Ovary (tissue), 10 donors: ENCODE measurements at regions of chr7 and their contacts with region 1.

Region 1: DNA sequence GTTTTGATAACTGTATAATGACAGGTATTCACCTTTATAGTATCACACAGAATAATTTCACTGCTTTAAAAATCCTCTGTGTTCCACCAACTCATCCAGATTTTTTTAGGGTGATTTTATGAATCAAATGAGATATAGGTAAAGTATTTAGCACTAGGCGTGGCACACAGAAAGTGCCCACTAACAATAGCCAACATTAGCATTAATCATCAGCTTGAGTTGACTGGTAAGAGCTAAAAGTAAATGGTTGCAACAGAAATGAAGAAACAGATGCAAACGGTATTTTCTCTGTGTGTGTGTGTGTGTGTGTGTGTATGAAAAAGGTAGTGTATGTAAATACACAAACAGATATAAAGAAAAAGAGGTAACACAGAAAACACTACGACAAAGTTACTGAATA is 378.8 kb upstream of the ETV1 start:
- DNase-seq: no peak
- H3K4me3 ChIP-seq: no peak overlapping the region
- H3K27ac ChIP-seq: no peak overlapping the region
- H3K4me1 ChIP-seq: no peaks in the 10 kb centered on the region
- H3K27me3 ChIP-seq: no peaks in the 10 kb centered on the region
- CTCF ChIP-seq: no peak
- EP300 ChIP-seq: no peak
- POLR2A ChIP-seq: no peak

Region 2: GRCh38 chr7:14305233-14305866 is 62.9 kb before region 1 on chr7:
- intact Hi-C with region 1: no loop called
- DNase-seq: no peak
- H3K4me3 ChIP-seq: no peak overlapping the region
- H3K27ac ChIP-seq: no peak overlapping the region
- H3K4me1 ChIP-seq: no peaks in the 10 kb centered on the region
- H3K27me3 ChIP-seq: no peaks in the 10 kb centered on the region
- CTCF ChIP-seq: no peak
- EP300 ChIP-seq: no peak
- POLR2A ChIP-seq: no peak

Region 3: DNA sequence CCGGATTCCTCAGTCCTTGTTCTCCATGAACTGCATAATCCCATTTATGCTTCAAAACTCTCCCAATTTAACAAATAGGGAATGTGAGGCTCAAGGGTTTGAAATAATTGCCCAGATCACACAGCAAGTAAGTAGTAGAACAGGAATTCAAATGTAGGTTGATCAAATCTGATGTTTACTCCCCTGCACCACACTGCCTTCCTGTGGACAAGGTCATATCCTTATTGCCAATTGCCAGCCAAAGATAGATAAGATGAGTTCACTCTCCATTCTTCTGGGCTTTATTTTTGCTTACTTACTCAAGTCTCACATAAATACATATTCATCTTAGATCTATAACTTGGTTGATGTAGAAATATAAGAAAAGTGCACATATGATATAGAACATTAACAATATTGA is 56.4 kb after region 1 on chr7:
- intact Hi-C with region 1: no loop called
- DNase-seq: no peak
- H3K4me3 ChIP-seq: no peak overlapping the region
- H3K27ac ChIP-seq: no peak overlapping the region
- H3K4me1 ChIP-seq: no peaks in the 10 kb centered on the region
- H3K27me3 ChIP-seq: peaks cover 3% of the 10 kb centered on the region
- CTCF ChIP-seq: no peak
- EP300 ChIP-seq: no peak
- POLR2A ChIP-seq: no peak

Region 4: GRCh38 chr7:14598978-14599377 is 230.7 kb after region 1 on chr7:
- intact Hi-C with region 1: loop called in 1 of 4 experiments (anchors 5 kb)
- DNase-seq: no peak
- H3K4me3 ChIP-seq: no peak overlapping the region
- H3K27ac ChIP-seq: no peak overlapping the region
- H3K4me1 ChIP-seq: no peaks in the 10 kb centered on the region
- H3K27me3 ChIP-seq: no peaks in the 10 kb centered on the region
- CTCF ChIP-seq: no peak
- EP300 ChIP-seq: no peak
- POLR2A ChIP-seq: no peak

Region 5: DNA sequence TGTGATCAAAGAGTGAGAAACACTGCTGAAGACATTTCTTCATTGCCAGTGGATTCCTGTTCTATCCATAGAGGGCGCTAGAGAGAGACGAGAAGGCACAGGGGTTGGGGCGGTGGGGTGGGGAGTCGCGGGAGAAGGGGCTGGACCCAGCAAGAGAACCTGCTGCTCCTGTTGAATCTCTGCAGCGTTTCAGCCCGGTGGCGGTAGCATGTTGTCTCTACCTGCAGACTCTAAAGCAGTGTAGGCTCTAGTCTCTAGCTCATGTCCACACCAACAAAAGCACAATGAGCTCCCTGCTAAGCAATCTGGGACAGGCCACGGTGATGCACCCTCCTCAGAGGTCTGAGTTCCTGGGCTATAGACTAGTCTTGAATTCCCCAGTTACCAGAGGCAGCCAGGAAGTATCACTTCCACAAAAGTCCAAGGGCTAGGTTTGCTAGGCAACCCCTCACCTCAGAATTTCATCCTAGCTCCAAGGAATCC is 366.6 kb after region 1 on chr7:
- intact Hi-C with region 1: no loop called
- DNase-seq: no peak
- H3K4me3 ChIP-seq: no peak overlapping the region
- H3K27ac ChIP-seq: no peak overlapping the region
- H3K4me1 ChIP-seq: no peaks in the 10 kb centered on the region
- H3K27me3 ChIP-seq: no peaks in the 10 kb centered on the region
- CTCF ChIP-seq: no peak
- EP300 ChIP-seq: no peak
- POLR2A ChIP-seq: no peak